ENCODE measurements at regions of chr15 and their contacts with region 1.

Region 1: DNA sequence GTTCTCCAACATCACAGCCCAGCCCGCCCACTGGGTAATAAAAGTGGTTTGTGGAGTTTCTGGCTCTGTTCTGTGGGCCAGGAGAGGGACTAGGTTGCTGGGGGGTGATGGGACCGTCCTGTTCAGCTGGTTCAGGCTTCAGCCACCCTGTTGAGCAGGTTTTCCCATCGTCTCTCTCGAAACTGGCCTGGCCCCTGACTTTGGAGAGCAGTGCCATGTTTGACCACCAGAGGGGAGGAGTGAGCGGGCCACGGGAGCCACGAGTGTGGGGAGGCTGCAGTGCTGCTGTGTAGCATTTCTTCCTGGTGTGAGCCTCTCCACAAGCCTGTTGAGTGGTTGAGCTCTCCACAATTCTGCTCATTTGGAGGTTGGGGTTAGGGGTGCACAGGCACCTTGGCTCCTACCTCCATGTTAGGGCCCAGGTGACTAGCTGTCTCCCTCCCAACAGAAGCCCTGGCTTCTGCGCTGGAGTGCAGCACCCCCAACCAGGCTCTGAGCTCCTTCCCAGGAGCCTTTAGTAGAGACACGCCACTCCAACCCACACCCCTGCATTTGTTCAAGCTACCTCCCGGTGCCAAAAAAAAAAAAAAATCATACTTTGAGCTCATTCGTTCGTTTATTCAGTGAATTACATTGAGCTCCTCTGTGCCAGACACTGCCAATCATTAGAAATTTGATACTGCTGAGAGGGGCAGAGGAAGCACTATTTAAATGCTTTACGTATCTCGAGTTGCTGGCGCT is 13.9 kb downstream of the SPINT1 start:
- DNase-seq: peak; percentile 84
- H3K4me3 Mint-ChIP-seq: no peak overlapping the region
- H3K27ac Mint-ChIP-seq: no peak overlapping the region
- H3K4me1 Mint-ChIP-seq: peaks cover 18% of the 10 kb centered on the region
- H3K27me3 Mint-ChIP-seq: no peaks in the 10 kb centered on the region

Region 2: GRCh38 chr15:40782580-40783227 is 75.1 kb before region 1 on chr15:
- CTCF ChIA-PET with region 1: interaction called, 10 read pairs
- POLR2A ChIA-PET with region 1: no interaction called
- DNase-seq: peak; percentile 84
- H3K4me3 Mint-ChIP-seq: no peak overlapping the region
- H3K27ac Mint-ChIP-seq: no peak overlapping the region
- H3K4me1 Mint-ChIP-seq: peaks cover 16% of the 10 kb centered on the region
- H3K27me3 Mint-ChIP-seq: no peaks in the 10 kb centered on the region

Region 3: GRCh38 chr15:40879604-40880003 is 21.8 kb after region 1 on chr15:
- CTCF ChIA-PET with region 1: interaction called, 34 read pairs
- POLR2A ChIA-PET with region 1: interaction called, 7 read pairs
- DNase-seq: no peak
- H3K4me3 Mint-ChIP-seq: no peak overlapping the region
- H3K27ac Mint-ChIP-seq: no peak overlapping the region
- H3K4me1 Mint-ChIP-seq: peaks cover 14% of the 10 kb centered on the region
- H3K27me3 Mint-ChIP-seq: peaks cover 10% of the 10 kb centered on the region

Region 4: GRCh38 chr15:40906091-40906990 is 48.6 kb after region 1 on chr15:
- CTCF ChIA-PET with region 1: interaction called, 16 read pairs
- POLR2A ChIA-PET with region 1: interaction called, 4 read pairs
- DNase-seq: peak; percentile 76
- H3K4me3 Mint-ChIP-seq: peak overlapping the region; percentile 71
- H3K27ac Mint-ChIP-seq: no peak overlapping the region
- H3K4me1 Mint-ChIP-seq: peaks cover 33% of the 10 kb centered on the region
- H3K27me3 Mint-ChIP-seq: no peaks in the 10 kb centered on the region

Region 5: DNA sequence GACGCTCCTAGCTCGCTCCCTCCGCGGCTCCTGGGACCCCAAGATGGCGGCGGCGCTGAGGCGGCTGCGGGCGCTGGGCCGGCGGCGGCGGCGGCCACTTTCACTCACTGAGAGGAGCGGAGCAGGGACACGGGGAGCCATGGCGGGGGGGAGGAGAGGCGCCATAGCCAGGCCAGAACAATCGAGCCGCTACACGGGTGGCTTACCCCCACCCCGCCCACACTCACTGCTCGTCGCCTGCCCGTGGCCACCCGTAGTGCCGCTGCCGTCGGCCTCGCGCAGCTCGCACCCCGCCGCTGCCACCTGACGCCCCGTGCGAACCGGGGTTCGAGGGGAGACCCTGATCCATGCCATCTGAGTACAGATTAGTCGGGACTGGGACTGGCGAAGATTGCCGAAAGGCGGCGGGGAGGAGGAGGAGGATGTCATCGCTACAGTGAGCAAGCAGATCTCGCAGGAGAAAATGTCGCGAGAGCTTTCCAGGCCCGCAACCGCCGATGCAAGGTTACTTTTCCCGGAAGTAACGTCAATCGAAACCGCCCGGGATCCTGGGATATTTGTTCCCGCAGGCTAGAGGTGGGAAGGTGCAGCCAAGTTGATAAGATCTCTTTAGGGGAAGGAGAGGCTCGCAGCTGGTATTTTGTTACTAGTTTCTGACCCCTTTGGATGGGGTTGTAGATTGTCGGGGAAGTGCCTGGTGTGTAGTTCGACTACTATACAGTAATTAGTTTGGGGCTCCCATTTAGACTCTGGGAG is 258.5 kb after region 1 on chr15 and contains the start of gene INO80:
- CTCF ChIA-PET with region 1: no interaction called
- POLR2A ChIA-PET with region 1: no interaction called
- DNase-seq: peak; percentile 98
- H3K4me3 Mint-ChIP-seq: peak within 1 kb of the TSS; percentile 89
- H3K27ac Mint-ChIP-seq: peak within 1 kb of the TSS; percentile 96
- H3K4me1 Mint-ChIP-seq: peaks cover 34% of the 10 kb centered on the region
- H3K27me3 Mint-ChIP-seq: no peaks in the 10 kb centered on the region
- total RNA-seq, gene INO80: 21.8 to 22.1 TPM

Region 6: DNA sequence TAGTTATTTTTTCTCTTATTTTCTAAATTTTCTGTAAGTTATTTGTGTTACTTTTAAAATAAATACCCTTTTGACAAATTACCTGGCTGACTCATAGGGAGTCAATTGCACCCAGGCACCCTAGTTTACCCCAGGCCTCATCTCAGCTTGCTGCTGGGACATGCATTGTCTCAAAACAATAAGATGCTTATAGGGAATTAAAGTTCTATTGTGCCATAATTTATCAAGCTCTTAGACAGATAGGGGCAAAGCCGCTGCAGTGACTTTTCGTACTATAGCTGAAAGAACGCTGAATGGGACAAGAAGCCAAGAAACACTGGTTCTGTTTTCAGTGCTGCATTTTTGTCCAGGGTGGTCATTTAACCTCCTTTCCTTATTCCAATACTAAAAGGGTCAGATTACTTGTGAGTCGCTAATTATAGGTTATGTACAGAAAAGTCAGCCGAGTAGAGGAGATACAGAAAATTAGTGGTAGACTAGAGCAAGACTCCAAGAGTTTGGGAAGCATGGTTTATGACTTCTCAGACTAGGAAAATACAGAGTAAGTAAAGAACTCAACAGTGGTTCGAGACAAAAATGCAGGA is 322.5 kb after region 1 on chr15:
- CTCF ChIA-PET with region 1: interaction called, 10 read pairs
- POLR2A ChIA-PET with region 1: no interaction called
- DNase-seq: no peak
- H3K4me3 Mint-ChIP-seq: no peak overlapping the region
- H3K27ac Mint-ChIP-seq: no peak overlapping the region
- H3K4me1 Mint-ChIP-seq: no peaks in the 10 kb centered on the region
- H3K27me3 Mint-ChIP-seq: no peaks in the 10 kb centered on the region